Thyroid gland (tissue), 4 donors: ENCODE measurements at regions of chr13 and their contacts with region 1.

Region 1: DNA sequence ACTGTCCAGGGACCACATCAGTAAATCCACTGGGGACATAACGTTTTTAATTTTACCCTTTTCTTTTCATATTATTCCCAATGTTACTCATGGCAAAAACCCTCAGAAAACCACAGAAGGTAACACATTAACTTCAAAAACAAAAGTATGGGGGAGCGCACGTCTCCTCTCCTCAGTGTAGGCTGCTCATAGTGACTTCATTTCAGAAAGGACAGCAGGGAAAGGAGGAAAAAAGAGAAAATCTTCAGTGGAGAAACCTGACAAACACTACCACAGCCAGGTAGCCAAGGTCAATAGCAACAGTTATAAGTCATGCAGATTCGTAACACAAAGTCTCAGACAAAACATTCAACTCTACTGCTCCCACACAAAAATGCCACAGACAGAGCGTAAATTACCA is 21.4 kb downstream of the DZIP1 start:
- DNase-seq: no peak
- H3K4me3 ChIP-seq: no peak overlapping the region
- H3K27ac ChIP-seq: no peak overlapping the region
- H3K4me1 ChIP-seq: no peaks in the 10 kb centered on the region
- H3K27me3 ChIP-seq: no peaks in the 10 kb centered on the region
- CTCF ChIP-seq: no peak
- POLR2A ChIP-seq: no peak

Region 2: DNA sequence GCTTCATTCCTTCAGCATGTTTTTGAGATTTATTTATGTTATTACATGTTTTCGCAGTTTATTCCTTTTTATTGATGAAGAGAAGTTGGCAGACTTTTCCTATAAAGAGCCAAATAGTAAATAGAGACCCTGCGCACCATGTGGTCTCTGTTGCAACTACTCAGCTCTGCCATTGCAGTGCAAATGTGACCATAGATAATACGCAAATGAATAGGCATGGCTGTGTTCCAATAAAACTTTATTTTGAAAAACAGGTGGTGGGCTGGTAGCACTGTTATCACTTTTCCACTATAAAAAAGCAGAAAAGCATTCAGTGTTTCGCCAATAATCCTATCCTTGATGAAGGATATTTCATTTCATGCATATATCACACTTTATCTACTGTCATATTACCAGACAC is 148.8 kb after region 1 on chr13:
- intact Hi-C with region 1: no loop called
- DNase-seq: no peak
- H3K4me3 ChIP-seq: no peak overlapping the region
- H3K27ac ChIP-seq: no peak overlapping the region
- H3K4me1 ChIP-seq: no peaks in the 10 kb centered on the region
- H3K27me3 ChIP-seq: no peaks in the 10 kb centered on the region
- CTCF ChIP-seq: no peak
- POLR2A ChIP-seq: no peak

Region 3: DNA sequence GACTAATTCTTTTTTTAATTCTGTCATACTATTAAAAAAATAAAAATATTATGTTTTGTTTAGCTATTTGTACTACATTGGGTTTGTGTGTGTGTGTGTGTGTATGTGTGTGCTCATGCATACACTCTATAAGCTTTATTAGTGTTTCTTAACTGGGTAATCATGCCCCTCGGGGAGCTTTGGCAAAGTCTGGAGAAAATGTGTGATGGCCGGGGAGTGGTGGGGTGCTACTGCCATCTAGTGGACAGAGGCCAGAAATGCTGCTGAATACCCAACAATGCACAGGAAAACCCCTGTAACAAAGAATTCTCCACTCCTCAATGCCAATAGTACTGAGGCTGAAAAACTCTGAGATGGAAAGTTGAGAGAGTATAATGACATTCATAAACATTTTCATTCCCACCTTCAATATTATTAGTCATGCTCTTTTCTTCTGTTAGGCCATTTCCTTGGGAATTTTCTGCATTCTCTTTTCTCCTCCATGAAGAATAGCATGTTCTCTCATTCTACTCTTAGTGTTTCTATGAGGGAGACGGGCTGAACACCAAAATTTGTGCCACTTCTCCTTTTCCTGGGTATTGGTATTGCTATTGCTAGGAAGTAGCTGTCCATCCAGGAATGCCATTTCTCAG is 211.1 kb after region 1 on chr13:
- intact Hi-C with region 1: loop called (anchors 2 kb)
- DNase-seq: peak; percentile 50 to 67
- H3K4me3 ChIP-seq: no peak overlapping the region
- H3K27ac ChIP-seq: no peak overlapping the region
- H3K4me1 ChIP-seq: no peaks in the 10 kb centered on the region
- H3K27me3 ChIP-seq: no peaks in the 10 kb centered on the region
- CTCF ChIP-seq: peak; percentile 79 to 91 (median 89)
- POLR2A ChIP-seq: no peak